ENCODE measurements at regions of chr13 and their contacts with region 1.

Region 1: GRCh38 chr13:50911937-50912795 is 2.6 kb downstream of the RNASEH2B start:
- H3K4me3 Mint-ChIP-seq: peak overlapping the region; percentile 39
- H3K27ac Mint-ChIP-seq: peak overlapping the region; percentile 73
- H3K4me1 Mint-ChIP-seq: peaks cover 51% of the 10 kb centered on the region
- H3K27me3 Mint-ChIP-seq: no peaks in the 10 kb centered on the region

Region 2: GRCh38 chr13:49976314-49977258 is 935.6 kb before region 1 on chr13:
- intact Hi-C with region 1: loop called (anchors 5 kb)
- H3K4me3 Mint-ChIP-seq: no peak overlapping the region
- H3K27ac Mint-ChIP-seq: no peak overlapping the region
- H3K4me1 Mint-ChIP-seq: peaks cover 9% of the 10 kb centered on the region
- H3K27me3 Mint-ChIP-seq: no peaks in the 10 kb centered on the region

Region 3: GRCh38 chr13:50081679-50082425 is 830.3 kb before region 1 on chr13:
- intact Hi-C with region 1: loop called (anchors 10 kb)
- H3K4me3 Mint-ChIP-seq: peak overlapping the region; percentile 98
- H3K27ac Mint-ChIP-seq: peak overlapping the region; percentile 91
- H3K4me1 Mint-ChIP-seq: peaks cover 52% of the 10 kb centered on the region
- H3K27me3 Mint-ChIP-seq: no peaks in the 10 kb centered on the region

Region 4: GRCh38 chr13:50531917-50532899 is 380.0 kb before region 1 on chr13:
- intact Hi-C with region 1: loop called (anchors 5 kb)
- H3K4me3 Mint-ChIP-seq: no peak overlapping the region
- H3K27ac Mint-ChIP-seq: no peak overlapping the region
- H3K4me1 Mint-ChIP-seq: peaks cover 28% of the 10 kb centered on the region
- H3K27me3 Mint-ChIP-seq: no peaks in the 10 kb centered on the region

Region 5: DNA sequence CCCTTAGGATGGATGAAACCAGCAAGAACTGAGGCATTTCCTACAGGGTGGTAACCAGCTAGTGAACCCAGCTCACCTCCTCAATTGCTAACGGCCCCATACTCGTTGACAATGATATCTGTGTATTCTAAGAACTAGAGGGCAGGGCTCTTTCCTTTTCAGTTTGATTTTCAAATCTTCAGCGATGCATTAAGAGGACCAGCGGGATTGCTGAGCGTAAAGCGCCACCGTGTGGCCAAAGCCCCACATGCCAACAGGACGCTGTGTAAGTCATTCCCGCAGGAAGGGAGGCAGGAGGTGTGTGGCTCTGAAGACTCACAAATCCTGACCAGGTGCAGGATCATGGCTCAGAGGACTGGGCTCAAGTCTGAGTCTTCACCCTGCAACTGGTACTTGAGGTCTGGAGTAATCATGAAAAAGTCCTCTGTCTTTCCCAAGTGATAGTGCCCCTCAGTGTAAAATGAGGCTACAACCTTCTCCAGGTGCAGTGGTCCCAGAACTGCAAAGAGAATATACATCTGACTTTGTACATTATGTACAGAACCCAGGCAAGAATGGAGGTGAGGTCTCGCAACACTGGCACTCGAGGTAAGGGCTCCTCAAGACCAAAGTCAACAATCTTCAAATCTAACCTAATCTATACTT is 158.0 kb after region 1 on chr13:
- intact Hi-C with region 1: loop called (anchors 5 kb)
- H3K4me3 Mint-ChIP-seq: no peak overlapping the region
- H3K27ac Mint-ChIP-seq: no peak overlapping the region
- H3K4me1 Mint-ChIP-seq: peaks cover 11% of the 10 kb centered on the region
- H3K27me3 Mint-ChIP-seq: peaks cover 24% of the 10 kb centered on the region

Measured in dendritic cell treated with granulocyte-macrophage colony-stimulating factor and Interleukin-4, amounts not matched to agents 40 ng/mL and 50 ng/mL, for 4 days (primary cell).